Vagina (tissue), 2 donors: ENCODE measurements at regions of chr5 and their contacts with region 1.

Region 1: GRCh38 chr5:86814315-86814714 is 196.6 kb downstream of the COX7C start:
- DNase-seq: no peak
- H3K4me3 ChIP-seq: no peak overlapping the region
- H3K27ac ChIP-seq: no peak overlapping the region
- H3K4me1 ChIP-seq: no peaks in the 10 kb centered on the region
- H3K27me3 ChIP-seq: no peaks in the 10 kb centered on the region
- CTCF ChIP-seq: no peak
- POLR2A ChIP-seq: no peak

Region 2: GRCh38 chr5:86716121-86716520 is 98.2 kb before region 1 on chr5:
- intact Hi-C with region 1: loop called (anchors 2 kb)
- DNase-seq: no peak
- H3K4me3 ChIP-seq: no peak overlapping the region
- H3K27ac ChIP-seq: no peak overlapping the region
- H3K4me1 ChIP-seq: no peaks in the 10 kb centered on the region
- H3K27me3 ChIP-seq: no peaks in the 10 kb centered on the region
- CTCF ChIP-seq: no peak
- POLR2A ChIP-seq: no peak

Region 3: DNA sequence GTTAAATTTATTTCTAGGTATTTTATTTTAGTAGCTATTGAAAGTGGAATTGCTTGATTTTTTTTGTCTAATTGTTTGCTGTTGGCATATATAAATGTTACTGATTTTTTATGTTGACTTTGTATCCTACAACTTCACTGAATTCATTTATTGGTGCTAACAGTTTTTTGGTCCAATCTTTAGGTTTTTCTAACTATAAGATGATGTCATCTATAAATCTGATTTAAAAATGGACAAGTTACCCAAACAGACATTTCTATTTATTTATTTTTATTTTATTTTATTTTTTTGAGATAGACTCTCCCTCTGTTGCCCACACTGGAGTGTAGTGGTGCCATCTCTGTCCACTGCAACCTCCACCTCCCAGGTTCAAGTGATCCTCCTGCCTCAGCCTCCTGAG is 34.3 kb before region 1 on chr5:
- intact Hi-C with region 1: no loop called
- DNase-seq: no peak
- H3K4me3 ChIP-seq: no peak overlapping the region
- H3K27ac ChIP-seq: no peak overlapping the region
- H3K4me1 ChIP-seq: no peaks in the 10 kb centered on the region
- H3K27me3 ChIP-seq: no peaks in the 10 kb centered on the region
- CTCF ChIP-seq: no peak
- POLR2A ChIP-seq: no peak

Region 4: DNA sequence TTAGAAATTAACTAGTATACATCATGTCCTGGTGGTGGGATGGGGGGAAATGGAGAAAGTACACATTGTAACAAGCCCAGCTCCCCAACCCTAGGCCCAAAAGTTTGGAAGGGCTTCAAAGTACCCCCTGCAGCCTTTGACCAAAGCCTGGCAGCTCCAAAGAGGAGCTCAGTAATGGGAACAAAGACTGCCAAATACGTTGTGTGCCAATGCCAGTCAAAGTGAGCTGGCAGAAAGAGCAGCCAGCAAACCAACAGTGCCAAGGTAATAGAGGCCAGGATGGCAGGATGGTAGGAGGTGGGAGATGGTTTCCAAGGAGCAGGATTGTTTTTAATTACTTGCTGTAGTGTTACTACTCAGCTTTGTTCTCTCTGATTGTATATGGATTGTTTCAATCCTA is 51.7 kb after region 1 on chr5:
- intact Hi-C with region 1: no loop called
- DNase-seq: no peak
- H3K4me3 ChIP-seq: no peak overlapping the region
- H3K27ac ChIP-seq: no peak overlapping the region
- H3K4me1 ChIP-seq: no peaks in the 10 kb centered on the region
- H3K27me3 ChIP-seq: no peaks in the 10 kb centered on the region
- CTCF ChIP-seq: no peak
- POLR2A ChIP-seq: no peak